MCF 10A (cell line): ENCODE measurements at regions of chr3 and their contacts with region 1.

Region 1: DNA sequence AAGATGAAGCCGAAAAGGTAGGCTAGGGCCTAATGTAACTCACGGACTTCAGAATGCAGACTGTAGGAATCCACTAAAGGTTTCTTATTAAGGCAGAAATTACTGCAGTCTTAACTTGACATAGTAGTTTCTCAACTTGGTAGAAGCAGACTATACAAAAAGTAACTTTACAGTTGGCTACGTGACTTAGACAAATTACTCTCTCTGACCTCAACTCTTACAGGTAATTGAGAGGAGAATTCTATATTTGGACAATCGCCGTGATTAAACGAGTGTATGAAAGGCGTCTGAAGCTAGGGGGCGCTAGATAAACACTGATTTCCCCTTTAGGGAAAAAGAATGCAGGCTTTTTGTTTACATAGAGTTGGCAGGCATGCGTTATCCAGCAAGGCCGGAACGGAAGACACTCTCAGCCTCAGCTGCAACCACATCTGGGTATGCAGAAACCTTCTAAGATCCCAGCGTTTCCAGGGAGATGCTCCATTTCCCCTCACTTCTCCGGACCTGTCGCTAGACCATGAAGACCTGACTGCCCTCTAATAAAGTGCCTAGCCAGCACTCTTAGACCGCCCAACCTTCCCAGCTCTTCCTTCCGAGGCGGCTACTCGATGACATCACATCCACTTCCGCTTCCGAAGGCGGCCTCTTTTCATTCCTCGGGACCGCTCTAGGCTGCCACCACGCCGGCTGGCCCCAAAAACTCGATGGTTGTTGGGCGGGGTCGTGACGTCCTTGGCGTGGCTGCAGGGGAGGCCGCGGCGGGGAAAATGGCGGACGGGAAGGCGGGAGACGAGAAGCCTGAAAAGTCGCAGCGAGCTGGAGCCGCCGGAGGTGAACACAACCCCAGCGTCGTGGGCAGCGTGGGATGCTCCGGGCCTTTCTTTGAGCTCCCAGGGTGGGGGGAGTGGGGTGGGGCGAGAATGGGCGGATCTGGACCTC is at the start of gene PCNP:
- DNase-seq: peak; percentile 99
- H3K4me3 Mint-ChIP-seq: peak within 1 kb of the TSS; percentile 97
- H3K27ac Mint-ChIP-seq: peak within 1 kb of the TSS; percentile 100
- H3K4me1 Mint-ChIP-seq: peaks cover 28% of the 10 kb centered on the region
- H3K27me3 Mint-ChIP-seq: no peaks in the 10 kb centered on the region
- CTCF ChIP-seq: peak; percentile 68
- total RNA-seq, gene PCNP: 229 and 292 TPM in 2 replicates

Region 2: DNA sequence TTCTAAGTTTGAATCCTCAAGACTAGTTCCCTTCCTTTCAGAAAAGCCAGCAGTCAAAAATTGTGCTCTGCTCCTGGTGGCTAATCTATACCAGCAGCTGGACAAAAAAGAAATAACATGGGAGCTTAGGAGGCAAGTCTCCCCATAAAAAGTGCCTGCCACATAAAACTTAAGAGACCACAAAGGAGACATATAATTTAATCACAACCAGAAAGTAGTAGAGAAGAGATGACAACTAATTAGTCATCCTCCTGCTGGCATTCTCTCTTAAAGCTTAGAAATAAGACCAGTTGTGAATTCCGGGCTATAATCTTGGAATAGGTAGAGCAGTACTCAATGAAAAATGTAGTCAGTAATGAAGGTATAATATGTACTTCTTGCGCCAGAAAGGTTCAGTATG is 233.1 kb before region 1 on chr3:
- CTCF ChIA-PET with region 1: no interaction called
- POLR2A ChIA-PET with region 1: no interaction called
- intact Hi-C with region 1: no loop called
- DNase-seq: no peak
- H3K4me3 Mint-ChIP-seq: no peak overlapping the region
- H3K27ac Mint-ChIP-seq: no peak overlapping the region
- H3K4me1 Mint-ChIP-seq: no peaks in the 10 kb centered on the region
- H3K27me3 Mint-ChIP-seq: no peaks in the 10 kb centered on the region
- CTCF ChIP-seq: no peak

Region 3: GRCh38 chr3:101561630-101562328 is 11.9 kb before region 1 on chr3 and contains the start of gene TRMT10C:
- CTCF ChIA-PET with region 1: interaction called, 4 read pairs
- POLR2A ChIA-PET with region 1: interaction called, 102 read pairs
- intact Hi-C with region 1: no loop called
- DNase-seq: peak; percentile 93
- H3K4me3 Mint-ChIP-seq: peak within 1 kb of the TSS; percentile 90
- H3K27ac Mint-ChIP-seq: peak within 1 kb of the TSS; percentile 93
- H3K4me1 Mint-ChIP-seq: peaks cover 15% of the 10 kb centered on the region
- H3K27me3 Mint-ChIP-seq: no peaks in the 10 kb centered on the region
- CTCF ChIP-seq: no peak
- total RNA-seq, gene TRMT10C: 27.0 and 32.5 TPM in 2 replicates

Region 4: GRCh38 chr3:101635954-101636798 is 62.5 kb after region 1 on chr3:
- CTCF ChIA-PET with region 1: interaction called, 4 read pairs
- POLR2A ChIA-PET with region 1: interaction called, 3 read pairs
- intact Hi-C with region 1: loop called (anchors 1 kb)
- DNase-seq: peak; percentile 71
- H3K4me3 Mint-ChIP-seq: no peak overlapping the region
- H3K27ac Mint-ChIP-seq: no peak overlapping the region
- H3K4me1 Mint-ChIP-seq: peaks cover 5% of the 10 kb centered on the region
- H3K27me3 Mint-ChIP-seq: no peaks in the 10 kb centered on the region
- CTCF ChIP-seq: peak; percentile 49

Region 5: DNA sequence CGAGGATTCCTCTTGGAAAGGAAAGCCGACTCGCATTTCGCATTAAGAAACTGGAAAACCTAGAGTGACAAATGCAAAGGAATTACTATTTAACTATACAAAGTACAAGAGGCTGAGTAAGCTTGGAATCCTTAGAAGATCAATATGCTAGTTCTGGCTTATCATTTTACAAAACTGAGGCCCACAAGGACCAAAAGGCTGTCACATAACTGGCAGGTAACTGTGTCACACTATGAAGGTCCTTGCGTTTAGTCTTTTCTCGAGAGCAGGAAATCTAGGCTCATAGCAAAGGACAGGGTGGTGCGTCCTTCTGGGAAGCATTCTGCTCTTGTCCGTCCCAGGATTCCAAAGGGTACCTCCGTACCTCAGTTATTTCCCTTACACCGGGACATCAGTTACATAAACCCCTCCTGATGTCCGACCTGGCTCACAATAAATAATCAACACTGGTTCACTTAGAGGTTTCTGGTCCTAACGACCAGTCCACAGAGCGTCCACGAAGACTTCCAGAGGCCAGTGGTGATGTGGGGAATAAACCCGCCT is 112.2 kb after region 1 on chr3:
- CTCF ChIA-PET with region 1: interaction called, 3 read pairs
- POLR2A ChIA-PET with region 1: interaction called, 78 read pairs
- intact Hi-C with region 1: loop called (anchors 2 kb)
- DNase-seq: no peak
- H3K4me3 Mint-ChIP-seq: peak overlapping the region; percentile 96
- H3K27ac Mint-ChIP-seq: peak overlapping the region; percentile 98
- H3K4me1 Mint-ChIP-seq: peaks cover 20% of the 10 kb centered on the region
- H3K27me3 Mint-ChIP-seq: no peaks in the 10 kb centered on the region
- CTCF ChIP-seq: no peak

Region 6: DNA sequence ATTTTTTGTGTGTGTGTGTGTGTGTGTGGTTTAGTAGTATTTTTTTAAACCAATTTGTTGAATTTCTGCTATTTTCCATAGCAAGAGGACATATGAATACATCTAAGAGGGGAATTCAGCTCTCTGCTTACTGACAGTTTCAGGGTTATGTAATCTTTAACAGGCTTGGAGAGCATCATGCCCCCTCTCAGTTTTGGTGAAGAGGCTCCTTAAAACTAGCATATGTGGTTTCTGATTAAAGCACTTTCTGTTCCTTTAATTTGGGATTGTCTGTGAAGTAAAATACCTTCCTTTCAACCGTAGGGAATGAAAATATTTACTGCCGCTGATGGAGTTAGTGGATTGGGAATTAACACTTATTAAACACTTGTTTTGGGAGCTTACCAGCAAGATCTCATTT is 256.2 kb after region 1 on chr3:
- CTCF ChIA-PET with region 1: no interaction called
- POLR2A ChIA-PET with region 1: no interaction called
- intact Hi-C with region 1: no loop called
- DNase-seq: no peak
- H3K4me3 Mint-ChIP-seq: no peak overlapping the region
- H3K27ac Mint-ChIP-seq: peak overlapping the region; percentile 87
- H3K4me1 Mint-ChIP-seq: peaks cover 25% of the 10 kb centered on the region
- H3K27me3 Mint-ChIP-seq: no peaks in the 10 kb centered on the region
- CTCF ChIP-seq: no peak